ENCODE measurements at regions of chr2 and their contacts with region 1.

Region 1: DNA sequence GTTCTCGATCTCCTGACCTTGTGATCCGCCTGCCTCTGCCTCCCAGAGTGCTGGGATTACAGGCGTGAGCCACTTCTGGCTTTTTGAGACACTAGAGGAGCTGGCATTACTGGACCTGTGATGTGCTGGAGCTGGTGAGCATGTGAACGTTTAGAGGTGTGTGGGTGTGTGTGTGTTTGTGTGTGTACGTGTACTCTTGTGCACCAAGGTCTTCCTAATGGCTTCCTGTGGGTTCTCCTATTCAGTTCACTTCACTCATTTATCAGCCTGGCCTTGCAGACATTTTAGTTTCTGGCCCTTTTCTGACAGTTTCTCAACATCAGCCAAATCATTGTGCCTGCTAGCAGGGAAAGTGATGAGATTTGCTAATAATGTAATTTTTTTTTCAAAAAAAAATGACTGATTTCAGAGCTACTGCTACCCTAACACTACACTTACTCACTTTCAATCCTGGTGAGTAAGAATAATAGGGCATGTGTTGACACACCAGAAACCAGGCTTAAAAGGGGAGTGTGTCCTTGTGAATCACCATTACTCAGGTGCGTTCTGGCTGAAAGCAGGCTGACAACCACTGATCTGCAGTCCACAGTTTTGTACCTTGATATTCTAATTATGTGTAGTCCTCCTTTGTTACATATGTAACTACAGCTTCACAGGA is 41.0 kb upstream of the ACTR3 start:
- DNase-seq: peak; percentile 70
- H3K4me3 Mint-ChIP-seq: peak overlapping the region; percentile 30
- H3K27ac Mint-ChIP-seq: peak overlapping the region; percentile 87
- H3K4me1 Mint-ChIP-seq: peaks cover 21% of the 10 kb centered on the region
- H3K27me3 Mint-ChIP-seq: no peaks in the 10 kb centered on the region

Region 2: GRCh38 chr2:113692698-113693428 is 156.0 kb before region 1 on chr2:
- CTCF ChIA-PET with region 1: no interaction called
- POLR2A ChIA-PET with region 1: no interaction called
- intact Hi-C with region 1: loop called (anchors 1 kb)
- DNase-seq: peak; percentile 63
- H3K4me3 Mint-ChIP-seq: peak overlapping the region; percentile 71
- H3K27ac Mint-ChIP-seq: peak overlapping the region; percentile 95
- H3K4me1 Mint-ChIP-seq: peaks cover 42% of the 10 kb centered on the region
- H3K27me3 Mint-ChIP-seq: no peaks in the 10 kb centered on the region

Region 3: GRCh38 chr2:113700186-113700841 is 148.6 kb before region 1 on chr2:
- CTCF ChIA-PET with region 1: no interaction called
- POLR2A ChIA-PET with region 1: no interaction called
- intact Hi-C with region 1: loop called (anchors 1 kb)
- DNase-seq: peak; percentile 72
- H3K4me3 Mint-ChIP-seq: peak overlapping the region; percentile 52
- H3K27ac Mint-ChIP-seq: peak overlapping the region; percentile 59
- H3K4me1 Mint-ChIP-seq: peaks cover 28% of the 10 kb centered on the region
- H3K27me3 Mint-ChIP-seq: no peaks in the 10 kb centered on the region

Region 4: GRCh38 chr2:113876503-113877387 is 27.9 kb after region 1 on chr2:
- CTCF ChIA-PET with region 1: no interaction called
- POLR2A ChIA-PET with region 1: interaction called, 6 read pairs
- intact Hi-C with region 1: loop called (anchors 1 kb)
- DNase-seq: peak; percentile 93
- H3K4me3 Mint-ChIP-seq: peak overlapping the region; percentile 30
- H3K27ac Mint-ChIP-seq: peak overlapping the region; percentile 84
- H3K4me1 Mint-ChIP-seq: peaks cover 38% of the 10 kb centered on the region
- H3K27me3 Mint-ChIP-seq: no peaks in the 10 kb centered on the region

Region 5: GRCh38 chr2:113894156-113894743 is 45.4 kb after region 1 on chr2:
- CTCF ChIA-PET with region 1: no interaction called
- POLR2A ChIA-PET with region 1: no interaction called
- intact Hi-C with region 1: no loop called
- DNase-seq: no peak
- H3K4me3 Mint-ChIP-seq: peak overlapping the region; percentile 89
- H3K27ac Mint-ChIP-seq: peak overlapping the region; percentile 94
- H3K4me1 Mint-ChIP-seq: peaks cover 72% of the 10 kb centered on the region
- H3K27me3 Mint-ChIP-seq: no peaks in the 10 kb centered on the region

Region 6: GRCh38 chr2:113977660-113978523 is 129.0 kb after region 1 on chr2:
- CTCF ChIA-PET with region 1: no interaction called
- POLR2A ChIA-PET with region 1: no interaction called
- intact Hi-C with region 1: no loop called
- DNase-seq: no peak
- H3K4me3 Mint-ChIP-seq: no peak overlapping the region
- H3K27ac Mint-ChIP-seq: no peak overlapping the region
- H3K4me1 Mint-ChIP-seq: peaks cover 4% of the 10 kb centered on the region
- H3K27me3 Mint-ChIP-seq: no peaks in the 10 kb centered on the region